ENCODE measurements at regions of chr10 and their contacts with region 1.

Region 1: DNA sequence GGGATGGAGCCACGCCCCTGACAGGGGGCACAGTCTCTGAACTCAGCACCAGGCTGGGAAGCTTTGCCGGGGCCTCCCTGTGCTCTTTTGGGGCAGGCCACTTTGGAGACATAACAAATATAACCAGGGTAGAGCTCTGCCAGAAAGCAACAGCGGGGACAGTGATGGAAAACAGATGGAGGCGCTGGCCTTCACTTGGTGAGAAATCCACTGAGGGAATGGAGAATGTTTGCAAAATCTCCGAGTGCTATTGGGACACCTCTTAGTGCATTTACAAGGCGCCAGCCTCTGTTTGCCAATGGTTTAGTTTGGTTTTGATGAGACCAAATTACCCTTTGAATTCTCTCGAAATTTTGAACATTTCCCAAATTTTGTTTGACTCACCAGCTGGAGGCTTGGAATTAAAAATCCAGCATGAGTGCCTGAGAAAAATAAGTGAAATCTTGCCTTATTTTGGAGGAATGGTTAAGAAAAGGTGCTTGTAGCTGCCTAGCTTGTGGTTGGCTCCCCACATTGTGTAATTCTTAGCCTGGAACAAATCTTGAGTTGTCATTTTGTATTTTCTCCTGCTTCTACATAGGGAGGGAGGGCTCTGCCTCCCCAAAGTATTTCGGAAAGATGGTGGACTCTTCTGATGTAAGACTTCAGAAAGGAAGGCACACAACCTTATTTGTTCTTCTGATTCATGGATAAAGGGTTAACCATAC is 980.5 kb downstream of the LRMDA start:
- DNase-seq: no peak
- H3K4me3 ChIP-seq: no peak overlapping the region
- H3K27ac ChIP-seq: no peak overlapping the region
- H3K4me1 ChIP-seq: peaks cover 6 to 14% (median 7%) of the 10 kb centered on the region in 4 donors
- H3K27me3 ChIP-seq: no peaks in the 10 kb centered on the region
- CTCF ChIP-seq: no peak
- EP300 ChIP-seq: no peak
- POLR2A ChIP-seq: no peak

Region 2: GRCh38 chr10:76336213-76336963 is 75.5 kb before region 1 on chr10:
- intact Hi-C with region 1: no loop called
- DNase-seq: no peak
- H3K4me3 ChIP-seq: no peak overlapping the region
- H3K27ac ChIP-seq: peak overlapping the region in 3 of 4 donors; percentile 1 to 32 (median 16)
- H3K4me1 ChIP-seq: peaks cover 8 to 61% (median 44%) of the 10 kb centered on the region in 4 donors
- H3K27me3 ChIP-seq: no peaks in the 10 kb centered on the region
- CTCF ChIP-seq: no peak
- EP300 ChIP-seq: no peak
- POLR2A ChIP-seq: no peak

Region 3: DNA sequence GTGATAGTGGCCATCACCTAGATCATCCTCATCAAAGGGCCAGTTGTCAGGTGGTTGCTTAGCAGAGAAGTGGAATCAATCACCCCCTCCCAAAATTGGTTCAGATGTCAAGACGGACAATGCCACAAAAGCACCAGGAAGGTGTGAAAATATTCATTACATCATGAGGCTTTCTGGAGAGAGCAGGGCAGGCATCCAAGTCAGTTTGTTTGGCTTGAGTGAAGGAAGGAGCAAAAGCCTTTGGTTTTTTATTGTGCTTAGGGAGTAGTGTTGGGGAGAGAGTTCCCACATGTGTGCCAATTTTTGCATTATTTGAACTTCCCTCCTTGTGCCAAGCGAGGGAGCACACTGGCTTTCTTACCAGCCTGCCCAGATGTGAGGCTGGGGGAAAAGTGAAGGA is 102.4 kb after region 1 on chr10:
- intact Hi-C with region 1: loop called (anchors 10 kb)
- DNase-seq: no peak
- H3K4me3 ChIP-seq: no peak overlapping the region
- H3K27ac ChIP-seq: no peak overlapping the region
- H3K4me1 ChIP-seq: no peaks in the 10 kb centered on the region
- H3K27me3 ChIP-seq: no peaks in the 10 kb centered on the region
- CTCF ChIP-seq: no peak
- EP300 ChIP-seq: no peak
- POLR2A ChIP-seq: no peak